KBM-7 (cell line): ENCODE measurements at regions of chr9 and their contacts with region 1.

Region 1: GRCh38 chr9:129139993-129140396 is 28.8 kb downstream of the PTPA start:
- DNase-seq: peak; percentile 96

Region 2: GRCh38 chr9:129225815-129226214 is 85.8 kb after region 1 on chr9:
- in situ Hi-C with region 1: no loop called
- DNase-seq: peak; percentile 71

Region 3: GRCh38 chr9:129287619-129288305 is 147.8 kb after region 1 on chr9:
- in situ Hi-C with region 1: no loop called
- DNase-seq: no peak

Region 4: GRCh38 chr9:129610473-129611301 is 470.7 kb after region 1 on chr9:
- in situ Hi-C with region 1: loop called (anchors 10 kb)
- DNase-seq: peak; percentile 77

Region 5: GRCh38 chr9:129783516-129784361 is 643.7 kb after region 1 on chr9:
- in situ Hi-C with region 1: loop called (anchors 25 kb)
- DNase-seq: peak; percentile 81